A673 (cell line): ENCODE measurements at regions of chr11 and their contacts with region 1.

Region 1: DNA sequence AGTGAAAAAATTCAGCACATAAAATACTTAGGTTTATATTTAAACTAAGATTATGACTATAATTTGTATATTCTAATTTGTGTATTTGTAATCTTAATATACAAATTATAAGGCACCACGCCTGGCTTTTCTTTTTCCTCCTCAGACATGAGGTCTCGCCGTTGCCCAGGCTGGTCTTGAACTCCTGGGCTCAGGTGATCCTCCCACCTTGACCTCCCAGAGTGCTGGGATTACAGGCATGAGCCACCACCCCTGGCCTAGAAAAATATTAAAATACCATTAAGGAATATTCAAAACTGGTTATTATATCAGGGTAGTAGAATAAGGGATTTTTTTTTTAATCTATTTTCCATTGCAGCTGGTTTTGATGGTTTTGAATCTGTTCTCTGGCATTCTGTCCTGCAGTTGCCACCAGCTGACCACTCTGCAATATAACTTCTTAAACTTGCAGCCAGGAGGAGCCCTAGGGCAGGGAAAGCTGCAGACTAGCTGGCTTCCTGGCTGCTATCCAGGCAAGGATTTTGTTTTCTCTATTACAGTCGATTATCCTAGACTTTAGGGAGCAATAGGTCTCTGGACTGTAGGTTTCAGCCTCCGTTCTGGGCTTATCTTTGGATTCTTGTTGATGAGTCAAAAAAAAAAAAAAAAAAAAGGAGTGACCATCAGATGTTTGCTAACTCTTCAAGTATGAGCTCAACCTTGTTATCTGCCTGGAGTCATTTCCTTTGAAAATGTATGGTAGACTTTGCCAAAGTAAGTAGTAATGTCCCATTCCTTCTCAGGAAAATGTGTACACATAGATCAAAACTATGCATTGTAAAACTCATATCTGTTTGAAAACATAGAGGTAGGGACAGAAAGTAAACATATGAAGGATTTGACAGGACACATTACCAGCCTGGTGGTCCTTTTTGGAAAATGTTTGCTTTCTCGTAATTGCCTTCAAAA is 13.2 kb downstream of the POLA2 start:
- DNase-seq: peak; percentile 82
- H3K4me3 ChIP-seq: no peak overlapping the region
- H3K27ac ChIP-seq: no peak overlapping the region
- H3K4me1 ChIP-seq: peaks cover 25% of the 10 kb centered on the region
- H3K27me3 ChIP-seq: no peaks in the 10 kb centered on the region
- CTCF ChIP-seq: peak; percentile 86

Region 2: GRCh38 chr11:65251476-65251875 is 23.5 kb before region 1 on chr11:
- CTCF ChIA-PET with region 1: no interaction called
- POLR2A ChIA-PET with region 1: no interaction called
- intact Hi-C with region 1: no loop called
- DNase-seq: no peak
- H3K4me3 ChIP-seq: no peak overlapping the region
- H3K27ac ChIP-seq: no peak overlapping the region
- H3K4me1 ChIP-seq: no peaks in the 10 kb centered on the region
- H3K27me3 ChIP-seq: no peaks in the 10 kb centered on the region
- CTCF ChIP-seq: no peak

Region 3: DNA sequence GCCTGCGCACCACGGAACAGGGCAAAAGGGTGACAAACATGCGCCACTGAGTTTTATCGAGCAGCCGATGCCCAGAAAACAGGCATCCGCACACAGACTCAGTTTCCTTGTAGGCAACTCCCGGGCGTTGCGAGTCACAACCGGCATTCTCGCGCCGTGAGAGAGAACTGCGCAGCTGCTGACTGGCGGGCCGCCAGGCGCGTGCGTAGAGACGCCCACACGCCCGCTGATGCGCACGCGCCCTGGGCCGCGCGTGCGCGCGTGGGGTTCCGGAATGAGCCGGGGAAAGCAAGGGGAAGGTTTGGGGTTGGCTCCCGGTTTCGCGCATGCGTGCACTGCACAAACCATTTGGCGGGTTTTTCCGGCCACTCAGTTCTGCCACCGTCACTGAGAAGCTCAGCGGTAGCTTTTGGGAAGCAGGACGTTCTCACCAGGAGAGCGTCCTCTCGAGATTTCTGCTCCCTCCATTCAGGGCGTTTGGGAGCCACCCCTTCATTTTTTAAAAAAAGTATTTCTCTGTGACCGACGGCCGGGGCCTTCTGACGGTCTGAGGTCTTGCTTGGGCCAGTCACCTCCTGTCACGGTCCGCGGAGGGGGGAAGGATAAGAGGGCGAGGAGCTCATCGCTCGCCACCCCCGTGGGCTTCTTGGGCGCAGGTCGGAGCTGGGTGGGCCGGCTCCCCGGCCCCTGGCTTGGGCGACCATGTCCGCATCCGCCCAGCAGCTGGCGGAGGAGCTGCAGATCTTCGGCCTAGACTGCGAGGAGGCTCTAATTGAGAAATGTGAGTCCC is 13.2 kb before region 1 on chr11 and contains the start of gene POLA2:
- CTCF ChIA-PET with region 1: interaction called, 14 read pairs
- POLR2A ChIA-PET with region 1: interaction called, 17 read pairs
- intact Hi-C with region 1: no loop called
- DNase-seq: peak; percentile 99
- H3K4me3 ChIP-seq: peak within 1 kb of the TSS; percentile 74
- H3K27ac ChIP-seq: peak within 1 kb of the TSS; percentile 91
- H3K4me1 ChIP-seq: no peaks in the 10 kb centered on the region
- H3K27me3 ChIP-seq: no peaks in the 10 kb centered on the region
- CTCF ChIP-seq: no peak
- total RNA-seq, gene POLA2: 92.4 TPM in 2 replicates

Region 4: DNA sequence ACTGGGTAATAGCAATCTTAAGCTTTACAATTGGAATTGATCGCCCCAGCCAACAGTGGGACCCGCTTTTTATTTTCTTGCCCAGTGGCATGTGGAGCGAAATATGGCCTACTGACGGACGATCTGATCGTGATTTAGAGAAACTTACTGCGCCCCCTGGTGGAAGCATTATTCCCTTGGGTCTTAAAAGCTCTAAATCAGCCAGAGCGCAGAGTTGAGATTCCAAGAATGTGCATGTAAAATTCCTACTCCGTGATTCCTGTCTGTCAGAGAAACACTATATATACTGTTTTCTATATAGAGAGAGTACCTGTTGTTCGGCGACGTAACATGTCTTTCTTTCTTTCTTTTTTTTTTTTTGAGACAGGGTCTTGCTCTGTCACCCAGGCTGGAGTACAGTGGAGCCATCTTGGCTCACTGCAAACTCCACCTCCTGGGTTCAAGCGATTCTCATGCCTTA is 55.0 kb after region 1 on chr11:
- CTCF ChIA-PET with region 1: interaction called, 17 read pairs
- POLR2A ChIA-PET with region 1: no interaction called
- intact Hi-C with region 1: no loop called
- DNase-seq: peak; percentile 95
- H3K4me3 ChIP-seq: no peak overlapping the region
- H3K27ac ChIP-seq: peak overlapping the region; percentile 24
- H3K4me1 ChIP-seq: peaks cover 6% of the 10 kb centered on the region
- H3K27me3 ChIP-seq: no peaks in the 10 kb centered on the region
- CTCF ChIP-seq: peak; percentile 88

Region 5: GRCh38 chr11:65545853-65546216 is 270.8 kb after region 1 on chr11:
- CTCF ChIA-PET with region 1: interaction called, 15 read pairs
- POLR2A ChIA-PET with region 1: no interaction called
- intact Hi-C with region 1: no loop called
- DNase-seq: no peak
- H3K4me3 ChIP-seq: no peak overlapping the region
- H3K27ac ChIP-seq: no peak overlapping the region
- H3K4me1 ChIP-seq: peaks cover 14% of the 10 kb centered on the region
- H3K27me3 ChIP-seq: no peaks in the 10 kb centered on the region
- CTCF ChIP-seq: no peak